GM10248 (cell line): ENCODE measurements at regions of chr22 and their contacts with region 1.

Region 1: DNA sequence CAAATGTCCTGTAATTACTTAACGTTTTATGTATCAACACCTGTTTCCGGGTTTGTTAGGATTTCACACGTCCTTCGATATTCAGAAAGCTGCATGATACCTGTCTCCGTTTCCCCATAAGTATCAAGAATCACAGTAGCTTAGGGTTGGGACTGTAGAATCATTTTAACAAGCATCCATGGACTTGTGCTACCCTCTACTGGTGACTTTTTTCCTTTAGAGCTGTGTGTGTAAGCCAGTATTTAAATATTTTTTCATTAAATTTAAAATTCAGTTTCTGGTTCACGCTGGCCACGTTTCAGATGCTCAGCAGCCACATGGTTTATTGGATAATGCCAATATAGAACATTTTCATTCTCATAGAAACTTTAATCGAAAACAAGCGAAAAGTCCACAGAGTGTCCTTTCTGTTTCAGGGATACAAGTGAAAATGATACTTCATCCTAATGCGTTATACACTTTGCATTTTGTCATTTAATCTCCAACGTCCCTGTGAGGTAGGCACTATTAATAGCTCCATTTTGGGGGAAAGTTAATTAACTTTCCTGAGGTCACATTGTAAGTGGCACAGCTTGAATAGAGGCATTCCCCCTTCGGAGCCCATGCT is 61.5 kb upstream of the SLC25A18 start:
- DNase-seq: peak; percentile 68
- CTCF ChIP-seq: peak; percentile 63

Region 2: GRCh38 chr22:16917144-16918003 is 584.4 kb before region 1 on chr22:
- CTCF ChIA-PET with region 1: interaction called, 18 read pairs
- POLR2A ChIA-PET with region 1: no interaction called
- DNase-seq: peak; percentile 65
- CTCF ChIP-seq: peak; percentile 54

Region 3: DNA sequence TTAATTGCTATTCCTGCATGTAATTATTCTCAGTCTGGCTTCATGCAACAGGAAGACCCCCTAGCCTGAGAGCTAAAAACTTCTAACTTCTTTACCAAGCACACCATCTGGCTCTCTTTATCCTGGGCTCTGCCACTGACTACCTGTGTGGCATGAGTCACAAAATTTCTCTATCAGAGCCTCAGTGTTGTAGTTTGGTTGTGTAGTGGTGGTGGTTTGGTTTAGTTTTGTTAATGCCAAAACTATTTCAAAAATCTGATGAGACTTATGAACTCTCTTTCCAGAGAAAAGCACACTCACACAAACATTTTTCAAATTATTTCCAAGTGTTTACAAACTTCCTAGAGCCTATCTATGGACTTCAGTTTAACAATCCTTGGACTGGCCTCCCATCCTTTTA is 424.5 kb before region 1 on chr22:
- CTCF ChIA-PET with region 1: interaction called, 24 read pairs
- POLR2A ChIA-PET with region 1: no interaction called
- DNase-seq: no peak
- CTCF ChIP-seq: no peak

Region 4: DNA sequence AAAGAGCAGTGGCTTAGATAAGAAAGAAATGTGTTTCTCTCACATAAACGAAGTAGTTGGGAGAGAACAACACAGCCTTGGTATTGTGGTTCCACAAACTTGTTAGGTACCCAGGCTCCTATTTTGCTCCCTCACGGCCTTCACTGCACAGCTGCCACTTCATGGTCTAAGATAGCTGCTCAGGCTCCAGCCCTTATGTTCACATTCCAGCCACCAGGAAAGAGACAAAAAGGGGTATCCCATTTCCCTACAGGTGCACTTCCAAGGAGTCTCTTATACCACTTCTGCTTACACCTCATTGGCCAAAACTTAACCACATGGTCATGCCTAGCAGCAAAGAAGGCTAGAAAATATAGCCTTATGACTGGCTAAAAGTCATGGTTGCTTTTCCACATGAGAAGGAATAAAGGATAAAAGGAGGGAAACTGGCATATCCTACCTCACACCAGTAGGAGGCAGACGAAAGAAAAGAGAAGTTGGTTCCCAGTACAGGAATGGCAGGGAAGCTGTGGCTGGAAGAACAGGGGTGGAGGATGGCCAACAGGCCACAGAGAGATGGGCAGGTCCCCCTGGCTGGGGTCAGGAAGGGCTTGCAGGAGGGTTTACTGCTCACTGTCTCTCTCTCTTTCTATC is 337.3 kb before region 1 on chr22:
- CTCF ChIA-PET with region 1: interaction called, 23 read pairs
- POLR2A ChIA-PET with region 1: no interaction called
- DNase-seq: no peak
- CTCF ChIP-seq: no peak

Region 5: DNA sequence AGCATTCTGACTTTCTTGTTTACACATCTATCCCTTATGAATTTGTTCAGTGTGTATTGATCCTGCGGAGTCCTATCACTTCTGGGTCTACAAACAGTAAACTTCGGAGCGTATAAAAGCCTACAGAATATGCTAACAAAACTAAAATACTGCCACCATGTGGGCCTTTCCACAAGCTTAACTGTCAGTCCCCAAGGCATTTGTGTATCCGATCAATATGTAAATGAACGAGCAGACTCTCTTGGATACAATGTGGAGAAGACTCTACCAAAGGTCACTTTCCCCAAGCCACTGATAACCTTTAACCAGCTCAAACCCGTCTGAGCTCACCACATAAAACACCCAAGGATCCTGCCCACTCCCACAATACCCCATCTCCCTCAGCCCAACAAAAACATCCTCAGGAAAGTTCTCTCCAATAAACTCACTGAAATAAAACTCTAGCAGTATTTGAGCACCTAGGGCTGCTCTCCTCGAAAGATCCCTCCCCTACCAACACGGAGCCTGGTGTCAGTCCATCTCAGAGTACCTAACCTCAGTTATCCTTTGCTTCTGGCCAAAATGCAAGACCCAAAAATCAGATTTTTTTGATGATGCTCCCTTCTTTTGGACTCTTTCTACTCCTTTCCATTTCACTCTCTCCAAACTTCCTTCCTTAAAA is 300.4 kb before region 1 on chr22:
- CTCF ChIA-PET with region 1: interaction called, 25 read pairs
- POLR2A ChIA-PET with region 1: no interaction called
- DNase-seq: no peak
- CTCF ChIP-seq: no peak

Region 6: DNA sequence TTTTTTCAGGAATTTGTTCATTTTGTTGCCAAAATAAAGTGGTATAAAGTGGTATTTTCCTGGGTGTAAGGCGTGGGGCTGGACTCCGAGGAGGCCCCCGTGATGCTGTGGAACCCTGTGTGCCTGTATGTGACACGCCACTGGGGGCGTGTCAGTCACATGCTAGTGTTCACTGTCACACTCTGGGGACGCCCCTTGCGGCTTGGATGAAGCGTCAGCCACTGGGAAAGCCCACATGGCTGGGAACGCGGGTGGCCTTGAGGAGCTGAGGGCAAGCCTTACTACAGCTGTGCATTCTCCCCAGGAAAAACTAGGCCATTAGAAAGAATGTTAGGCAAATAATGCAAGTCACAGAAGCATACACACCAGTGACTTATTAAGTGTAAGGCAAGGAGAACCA is 15.5 kb before region 1 on chr22:
- CTCF ChIA-PET with region 1: interaction called, 14 read pairs
- POLR2A ChIA-PET with region 1: no interaction called
- DNase-seq: no peak
- CTCF ChIP-seq: no peak

Region 7: DNA sequence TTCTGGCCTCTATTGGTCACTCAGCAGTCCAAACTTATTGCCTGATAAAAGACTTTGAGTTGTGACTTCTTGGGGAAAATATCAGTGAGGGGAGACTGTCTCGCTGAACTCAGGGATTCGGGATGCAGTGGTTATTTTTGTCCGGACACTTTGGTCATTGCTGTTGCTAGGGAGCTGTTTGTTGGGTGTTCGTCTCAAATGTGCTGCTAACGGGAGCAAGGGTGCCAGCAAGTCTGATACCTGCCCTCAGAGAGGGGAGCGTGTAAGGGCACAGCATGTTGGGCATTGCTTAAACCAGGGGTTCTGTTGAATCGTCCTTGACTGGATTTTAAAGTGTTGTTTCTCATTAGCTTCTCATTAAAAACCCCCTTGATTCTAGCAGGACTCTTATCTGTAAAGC is 12.3 kb after region 1 on chr22:
- CTCF ChIA-PET with region 1: interaction called, 12 read pairs
- POLR2A ChIA-PET with region 1: no interaction called
- DNase-seq: no peak
- CTCF ChIP-seq: no peak